HepG2 (cell line): ENCODE measurements at regions of chr9 and their contacts with region 1.

Region 1: DNA sequence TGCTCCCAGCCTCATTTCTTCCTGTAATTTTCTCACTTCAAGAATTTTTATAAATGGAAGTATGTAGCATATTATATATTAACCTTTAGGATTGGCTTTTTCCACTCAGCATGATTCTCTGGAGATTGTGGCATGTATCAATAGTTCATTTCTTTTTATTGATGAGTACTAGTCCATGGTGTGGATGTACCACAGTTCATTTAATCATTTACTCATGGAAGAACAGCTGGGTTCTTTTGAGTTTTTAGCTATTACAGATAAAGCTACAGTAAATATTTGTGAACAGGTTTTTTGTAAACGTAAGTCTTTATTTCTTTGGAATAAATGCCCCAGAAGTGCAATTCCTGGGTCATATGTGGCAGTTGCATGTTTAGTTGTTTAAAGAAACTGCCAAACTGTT is 76.1 kb downstream of the UHRF2 start:
- DNase-seq: no peak
- ATAC-seq: 0 out of 3 replicates have a peak, but pooled peaks have one; percentile 22
- H3K4me3 ChIP-seq: no peak overlapping the region
- H3K27ac ChIP-seq: no peak overlapping the region
- H3K4me1 ChIP-seq: peaks cover 12% of the 10 kb centered on the region; the same call in 1 of the 2 replicates
- H3K27me3 ChIP-seq: no peaks in the 10 kb centered on the region
- CTCF ChIP-seq: no peak
- EP300 ChIP-seq: no peak
- POLR2A ChIP-seq: no peak
- RAD21 ChIP-seq: no peak

Region 2: DNA sequence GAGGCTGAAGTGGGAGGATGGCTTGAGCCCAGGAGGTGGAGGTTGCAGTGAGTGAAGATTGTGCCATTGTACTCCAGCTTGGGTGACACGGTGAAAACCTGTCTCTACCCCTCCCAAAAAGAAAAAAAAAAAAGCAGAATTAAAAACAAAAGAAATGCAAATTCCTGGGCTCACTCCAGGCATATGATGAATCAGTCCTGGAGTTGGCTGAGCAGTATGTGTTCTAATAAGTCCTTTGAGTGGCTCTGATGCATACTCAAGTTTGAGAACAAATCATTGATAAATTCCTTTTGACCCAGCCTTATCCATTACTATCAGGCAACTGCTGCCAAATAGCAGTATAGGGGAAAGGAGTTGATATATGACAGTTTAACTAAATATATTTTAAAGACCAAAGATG is 47.8 kb before region 1 on chr9:
- CTCF ChIA-PET with region 1: no interaction called
- POLR2A ChIA-PET with region 1: no interaction called
- in situ Hi-C with region 1: no loop called
- intact Hi-C with region 1: loop called (anchors 1 kb)
- DNase-seq: no peak
- ATAC-seq: no peak
- H3K4me3 ChIP-seq: no peak overlapping the region
- H3K27ac ChIP-seq: no peak overlapping the region
- H3K4me1 ChIP-seq: no peaks in the 10 kb centered on the region
- H3K27me3 ChIP-seq: no peaks in the 10 kb centered on the region
- CTCF ChIP-seq: no peak
- EP300 ChIP-seq: no peak
- POLR2A ChIP-seq: no peak
- RAD21 ChIP-seq: no peak

Region 3: DNA sequence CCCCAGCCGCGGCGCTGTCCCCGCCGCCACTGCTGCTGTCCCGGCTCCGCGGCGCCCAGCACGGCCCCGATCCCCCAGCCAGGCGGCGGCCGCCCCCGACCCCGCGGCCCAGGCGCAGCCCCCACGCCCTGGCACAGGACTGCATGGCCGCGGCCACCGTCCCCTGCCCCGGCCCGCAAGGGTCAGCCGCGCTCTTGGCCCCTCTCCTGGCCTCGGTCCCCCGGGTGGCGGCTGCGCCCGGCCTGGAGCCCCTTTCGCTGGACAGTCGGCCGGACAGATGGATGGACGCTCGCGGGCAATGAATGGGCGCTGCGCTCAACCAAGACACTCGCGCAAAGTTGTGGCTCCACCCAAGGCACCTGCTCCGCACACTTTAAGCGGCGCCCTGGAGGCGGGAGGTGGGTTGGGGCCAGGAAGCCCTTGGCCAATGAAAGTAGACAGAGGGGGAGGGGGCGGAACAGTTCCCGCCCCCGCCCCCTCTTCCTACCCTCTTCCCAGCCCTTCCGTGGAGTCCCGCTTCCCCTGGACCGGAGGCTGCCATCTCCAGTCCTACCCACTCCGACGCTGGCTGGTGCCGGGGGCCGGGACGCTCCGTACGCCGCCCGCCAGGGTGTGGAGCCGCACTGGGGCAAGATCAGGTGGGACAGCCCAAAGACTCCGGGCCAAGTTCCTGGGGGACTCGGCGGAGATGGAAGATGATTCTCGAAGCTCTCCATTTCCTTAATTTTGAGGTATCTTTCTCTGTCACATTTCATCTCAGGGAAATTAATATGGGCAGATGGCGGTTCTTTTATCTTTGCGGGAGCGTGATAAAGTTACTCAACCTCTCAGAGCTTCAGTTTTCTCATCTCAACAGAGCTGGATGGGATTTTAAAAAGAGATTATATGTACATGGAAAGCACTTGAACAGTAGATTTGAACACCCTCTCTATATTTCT is 156.5 kb after region 1 on chr9 and contains the start of gene GLDC:
- CTCF ChIA-PET with region 1: no interaction called
- POLR2A ChIA-PET with region 1: no interaction called
- in situ Hi-C with region 1: no loop called
- intact Hi-C with region 1: no loop called
- DNase-seq: peak; percentile 90
- ATAC-seq: peak; percentile 95
- H3K4me3 ChIP-seq: peak within 1 kb of the TSS; percentile 76 to 96 (median 81)
- H3K27ac ChIP-seq: peak within 1 kb of the TSS; percentile 72
- H3K4me1 ChIP-seq: peaks cover 61% of the 10 kb centered on the region
- H3K27me3 ChIP-seq: no peaks in the 10 kb centered on the region; a peak in 1 of 5 replicates
- CTCF ChIP-seq: peak; percentile 33
- EP300 ChIP-seq: no peak
- POLR2A ChIP-seq: peak; percentile 80 to 87
- RAD21 ChIP-seq: no peak
- total RNA-seq, gene GLDC: 51.0 and 115 TPM in 2 replicates